Motor neuron (in vitro differentiated cells): ENCODE measurements at regions of chr16 and their contacts with region 1.

Region 1: DNA sequence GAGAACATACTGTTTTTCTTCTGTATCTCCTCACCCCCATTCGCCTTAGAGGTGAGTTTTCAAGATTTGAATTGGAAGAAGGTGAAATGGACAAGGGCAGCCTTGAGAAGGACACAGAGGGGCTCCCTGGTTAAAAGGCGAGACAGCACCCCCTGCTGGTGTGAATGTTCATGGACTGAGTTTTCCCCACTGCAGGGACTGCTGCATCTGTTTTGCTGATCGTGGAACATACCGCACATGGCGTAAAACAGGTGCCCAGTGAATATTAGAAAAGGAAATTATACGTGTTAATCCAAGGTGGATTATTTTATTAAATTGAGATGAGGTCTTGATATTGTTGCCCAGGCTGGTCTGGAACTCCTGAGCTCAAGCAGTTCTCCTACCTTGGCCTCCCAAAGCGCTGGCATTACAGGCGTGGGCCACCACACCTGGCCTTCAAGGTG is 54.5 kb downstream of the NDE1 start:
- ATAC-seq: peak; percentile 27 to 98 (median 70)
- H3K4me3 ChIP-seq: no peak overlapping the region
- H3K27ac ChIP-seq: no peak overlapping the region
- H3K4me1 ChIP-seq: peaks cover 0 to 3% of the 10 kb centered on the region in 2 donors

Region 2: GRCh38 chr16:15032547-15033308 is 671.8 kb before region 1 on chr16:
- in situ Hi-C with region 1: no loop called
- ATAC-seq: no peak
- H3K4me3 ChIP-seq: no peak overlapping the region
- H3K27ac ChIP-seq: no peak overlapping the region
- H3K4me1 ChIP-seq: peaks cover 0 to 4% of the 10 kb centered on the region in 2 donors

Region 3: GRCh38 chr16:15548482-15548891 is 156.1 kb before region 1 on chr16:
- in situ Hi-C with region 1: no loop called
- ATAC-seq: no peak
- H3K4me3 ChIP-seq: no peak overlapping the region
- H3K27ac ChIP-seq: no peak overlapping the region
- H3K4me1 ChIP-seq: peaks cover 4 to 8% of the 10 kb centered on the region in 2 donors

Region 4: GRCh38 chr16:15607700-15608396 is 96.7 kb before region 1 on chr16:
- in situ Hi-C with region 1: loop called in 1 of 9 experiments (anchors 25 kb)
- ATAC-seq: peak in 3 of 8 experiments; percentile 25 to 67 (median 64)
- H3K4me3 ChIP-seq: no peak overlapping the region
- H3K27ac ChIP-seq: no peak overlapping the region
- H3K4me1 ChIP-seq: peaks cover 0 to 7% of the 10 kb centered on the region in 2 donors